Activated naive CD4-positive, alpha-beta T cell treated with anti-CD3 and anti-CD28 coated beads, Interleukin-2, amount 10 ng/mL, durations not matched to agents 7 days and 5 days (primary cell): ENCODE measurements at regions of chr17 and their contacts with region 1.

Region 1: DNA sequence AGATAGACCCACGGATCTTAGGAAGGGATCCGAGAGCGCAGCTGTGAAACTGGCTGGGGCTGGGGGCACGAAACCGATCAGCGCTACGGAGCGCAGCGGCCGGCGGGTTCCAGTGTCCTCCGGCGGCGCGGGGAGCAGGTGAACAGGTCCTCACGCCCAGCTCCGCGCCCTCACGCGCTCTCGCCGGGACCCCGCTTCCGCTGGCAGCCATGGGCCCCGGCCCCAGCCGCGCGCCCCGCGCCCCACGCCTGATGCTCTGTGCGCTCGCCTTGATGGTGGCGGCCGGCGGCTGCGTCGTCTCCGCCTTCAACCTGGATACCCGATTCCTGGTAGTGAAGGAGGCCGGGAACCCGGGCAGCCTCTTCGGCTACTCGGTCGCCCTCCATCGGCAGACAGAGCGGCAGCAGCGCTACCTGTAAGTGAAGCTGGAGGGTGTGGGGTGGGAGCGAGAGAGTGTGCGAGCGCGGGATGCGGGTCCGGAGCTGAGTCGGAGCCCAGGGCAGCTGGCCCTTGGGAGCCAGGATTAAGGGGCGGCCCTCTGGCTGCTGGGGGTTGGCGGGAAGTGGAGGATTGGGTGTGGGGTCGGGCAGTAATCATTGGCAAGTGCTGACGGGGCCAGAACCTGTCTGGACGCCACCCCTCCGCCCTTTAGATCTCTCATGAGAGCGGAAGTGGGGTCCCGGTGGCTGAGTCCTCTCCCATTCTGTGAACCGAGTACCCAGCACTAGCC is 486 bp downstream of the ITGA3 start:
- DNase-seq: peak; percentile 76
- H3K4me3 Mint-ChIP-seq: peak overlapping the region; percentile 83
- H3K27ac Mint-ChIP-seq: no peak overlapping the region
- H3K4me1 Mint-ChIP-seq: peaks cover 27% of the 10 kb centered on the region
- H3K27me3 Mint-ChIP-seq: peaks cover 32% of the 10 kb centered on the region

Region 2: DNA sequence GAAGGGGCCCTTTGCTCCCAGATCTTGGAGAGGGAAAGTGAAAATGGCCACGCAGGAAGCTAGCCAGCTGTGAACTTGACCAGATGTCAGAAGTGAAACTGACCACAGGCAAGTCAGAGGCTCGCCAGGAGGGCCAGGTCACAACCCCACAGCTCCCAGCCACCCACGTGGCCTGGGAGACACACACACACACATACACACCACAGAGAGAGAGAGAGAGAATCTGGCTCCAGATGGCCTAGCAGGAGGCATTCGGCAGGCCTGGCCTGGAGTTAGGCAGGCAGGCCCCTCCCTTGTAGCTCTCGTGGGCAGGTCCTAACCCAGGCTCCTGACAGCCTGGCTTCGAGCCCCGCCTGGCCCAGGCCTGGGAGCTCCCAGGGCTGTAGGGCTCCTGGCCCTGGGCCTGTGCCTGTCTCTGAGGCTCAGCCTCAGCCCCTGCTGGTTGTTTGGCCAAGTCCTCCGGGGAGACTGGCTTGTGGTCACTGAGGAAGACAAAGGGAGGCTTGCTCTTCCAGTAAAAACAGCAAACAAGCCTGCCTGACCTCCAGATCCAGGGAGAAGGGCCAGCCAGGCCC is 541.1 kb before region 1 on chr17:
- CTCF ChIA-PET with region 1: no interaction called
- DNase-seq: no peak
- H3K4me3 Mint-ChIP-seq: no peak overlapping the region
- H3K27ac Mint-ChIP-seq: no peak overlapping the region
- H3K4me1 Mint-ChIP-seq: no peaks in the 10 kb centered on the region
- H3K27me3 Mint-ChIP-seq: peaks cover 36% of the 10 kb centered on the region

Region 3: GRCh38 chr17:50026901-50027630 is 29.3 kb before region 1 on chr17:
- CTCF ChIA-PET with region 1: interaction called, 45 read pairs
- DNase-seq: peak; percentile 82
- H3K4me3 Mint-ChIP-seq: no peak overlapping the region
- H3K27ac Mint-ChIP-seq: no peak overlapping the region
- H3K4me1 Mint-ChIP-seq: peaks cover 18% of the 10 kb centered on the region
- H3K27me3 Mint-ChIP-seq: peaks cover 50% of the 10 kb centered on the region

Region 4: DNA sequence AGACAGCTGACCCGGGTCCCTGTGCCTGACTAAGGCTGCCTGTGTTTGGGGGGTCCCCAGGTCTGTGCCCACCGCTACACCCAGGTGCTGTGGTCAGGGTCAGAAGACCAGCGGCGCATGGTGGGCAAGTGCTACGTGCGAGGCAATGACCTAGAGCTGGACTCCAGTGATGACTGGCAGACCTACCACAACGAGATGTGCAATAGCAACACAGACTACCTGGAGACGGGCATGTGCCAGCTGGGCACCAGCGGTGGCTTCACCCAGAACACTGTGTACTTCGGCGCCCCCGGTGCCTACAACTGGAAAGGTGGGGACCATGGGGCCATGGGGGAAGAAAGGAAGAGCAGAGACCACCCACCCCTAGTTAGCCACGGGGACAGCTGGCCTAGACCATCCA is 11.6 kb after region 1 on chr17:
- CTCF ChIA-PET with region 1: interaction called, 14 read pairs
- DNase-seq: no peak
- H3K4me3 Mint-ChIP-seq: no peak overlapping the region
- H3K27ac Mint-ChIP-seq: no peak overlapping the region
- H3K4me1 Mint-ChIP-seq: no peaks in the 10 kb centered on the region
- H3K27me3 Mint-ChIP-seq: no peaks in the 10 kb centered on the region